Mammary epithelial cell (primary cell): ENCODE measurements at regions of chr10 and their contacts with region 1.

Region 1: DNA sequence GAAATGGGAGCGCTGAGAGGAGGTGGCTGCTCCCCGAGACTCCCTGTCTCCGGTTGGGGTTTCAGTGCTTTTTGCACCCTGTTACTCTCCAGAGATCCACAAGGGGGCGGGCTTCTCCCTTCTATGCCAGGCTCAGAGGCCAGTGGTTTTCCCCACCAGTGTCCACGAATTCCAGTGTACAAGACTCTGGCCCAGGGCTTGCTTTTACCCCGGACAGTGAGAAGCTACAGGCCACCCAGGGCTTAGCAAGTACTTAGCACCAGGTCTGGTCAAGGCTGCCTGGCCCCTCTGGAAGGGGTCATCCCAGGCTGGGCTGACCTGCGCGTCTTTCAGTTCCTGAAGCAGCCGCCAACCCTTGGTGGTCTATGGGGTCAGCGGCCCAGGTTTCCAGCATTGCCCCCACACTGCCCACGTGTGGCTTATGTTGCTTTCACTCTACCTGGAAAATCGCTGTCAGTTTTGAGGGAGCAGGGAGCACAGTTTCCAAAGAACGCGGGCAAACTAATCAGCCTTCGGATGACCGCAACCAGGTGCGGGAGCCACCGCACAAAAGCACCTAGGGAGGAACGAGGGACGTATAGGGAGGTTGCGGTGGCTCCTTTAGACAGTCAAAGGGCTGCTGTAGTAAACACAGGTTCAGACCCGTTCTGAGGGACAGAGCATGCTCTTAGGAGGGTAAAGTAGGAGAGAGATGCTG is 6.8 kb downstream of the CYP26A1 start:
- DNase-seq: no peak
- H3K4me3 ChIP-seq: no peak overlapping the region
- H3K27ac ChIP-seq: no peak overlapping the region
- H3K4me1 ChIP-seq: no peaks in the 10 kb centered on the region
- H3K27me3 ChIP-seq: peaks cover 2% of the 10 kb centered on the region
- CTCF ChIP-seq: peak; percentile 67 to 92

Region 2: GRCh38 chr10:92938841-92939240 is 141.7 kb before region 1 on chr10:
- CTCF ChIA-PET with region 1: no interaction called
- dilution Hi-C with region 1: no loop called
- in situ Hi-C with region 1: no loop called
- intact Hi-C with region 1: no loop called
- DNase-seq: no peak
- H3K4me3 ChIP-seq: no peak overlapping the region
- H3K27ac ChIP-seq: no peak overlapping the region
- H3K4me1 ChIP-seq: no peaks in the 10 kb centered on the region
- H3K27me3 ChIP-seq: no peaks in the 10 kb centered on the region
- CTCF ChIP-seq: no peak

Region 3: DNA sequence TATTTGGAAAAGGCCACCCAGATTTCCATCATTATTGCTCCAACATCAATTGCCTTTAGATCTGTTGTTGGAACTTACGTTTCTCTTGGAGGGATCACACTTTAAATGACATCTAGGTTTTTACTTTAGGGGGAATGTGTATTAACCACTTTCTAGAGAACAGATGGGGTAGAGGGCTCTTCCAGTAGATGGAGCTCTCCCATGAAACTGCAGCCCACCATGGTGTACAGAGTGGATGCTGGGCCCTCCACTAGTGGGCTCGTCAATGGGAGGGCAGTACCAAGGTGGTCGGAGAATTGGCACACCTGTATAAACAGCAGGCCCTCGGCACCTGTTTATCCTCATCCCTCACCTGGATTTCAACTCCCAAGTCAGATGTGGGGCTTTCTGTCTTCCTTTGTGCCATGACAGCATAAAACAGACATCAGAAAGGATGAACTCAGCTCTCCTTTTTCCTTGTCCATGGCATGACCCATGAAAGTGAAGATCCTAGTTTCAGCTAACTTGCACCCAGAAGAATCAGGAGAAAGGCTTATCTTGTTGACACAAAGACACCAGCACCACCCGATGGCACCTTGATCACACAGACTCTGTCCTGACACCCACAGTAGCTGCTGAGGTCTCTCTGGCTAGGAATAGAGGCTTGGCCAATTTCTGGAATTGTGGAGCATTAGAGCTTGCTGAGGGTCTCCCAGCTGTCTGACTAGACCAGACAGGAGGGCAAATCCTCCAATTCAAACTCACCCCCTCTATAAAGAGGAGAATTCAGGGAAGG is 143.7 kb after region 1 on chr10:
- CTCF ChIA-PET with region 1: no interaction called
- dilution Hi-C with region 1: no loop called
- in situ Hi-C with region 1: no loop called
- intact Hi-C with region 1: loop called (anchors 1 kb)
- DNase-seq: no peak
- H3K4me3 ChIP-seq: no peak overlapping the region
- H3K27ac ChIP-seq: no peak overlapping the region
- H3K4me1 ChIP-seq: no peaks in the 10 kb centered on the region
- H3K27me3 ChIP-seq: no peaks in the 10 kb centered on the region
- CTCF ChIP-seq: peak; percentile 19 to 51

Region 4: DNA sequence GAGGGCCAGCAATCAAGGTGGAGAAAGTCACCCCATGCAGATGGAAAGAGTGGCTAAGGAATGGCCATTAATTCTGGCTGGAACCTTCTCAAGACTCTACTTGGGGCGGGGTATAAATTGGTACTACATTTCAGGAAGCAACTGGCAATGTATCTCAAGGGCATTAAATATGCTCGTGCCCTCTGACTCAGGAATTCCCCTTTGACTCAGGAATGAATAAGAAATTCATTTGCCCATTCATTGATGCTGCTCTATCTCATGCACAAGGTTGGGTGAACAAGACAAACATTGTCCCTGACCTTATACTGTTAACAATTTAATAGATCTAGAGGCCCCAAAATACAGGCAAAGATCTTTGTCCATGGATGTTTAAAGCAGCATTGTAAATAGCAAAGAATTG is 213.5 kb after region 1 on chr10:
- CTCF ChIA-PET with region 1: no interaction called
- dilution Hi-C with region 1: no loop called
- in situ Hi-C with region 1: loop called in 1 of 2 experiments (anchors 5 kb)
- intact Hi-C with region 1: loop called (anchors 1 kb)
- DNase-seq: peak; percentile 60
- H3K4me3 ChIP-seq: no peak overlapping the region
- H3K27ac ChIP-seq: no peak overlapping the region
- H3K4me1 ChIP-seq: peaks cover 8% of the 10 kb centered on the region
- H3K27me3 ChIP-seq: no peaks in the 10 kb centered on the region
- CTCF ChIP-seq: no peak

Region 5: DNA sequence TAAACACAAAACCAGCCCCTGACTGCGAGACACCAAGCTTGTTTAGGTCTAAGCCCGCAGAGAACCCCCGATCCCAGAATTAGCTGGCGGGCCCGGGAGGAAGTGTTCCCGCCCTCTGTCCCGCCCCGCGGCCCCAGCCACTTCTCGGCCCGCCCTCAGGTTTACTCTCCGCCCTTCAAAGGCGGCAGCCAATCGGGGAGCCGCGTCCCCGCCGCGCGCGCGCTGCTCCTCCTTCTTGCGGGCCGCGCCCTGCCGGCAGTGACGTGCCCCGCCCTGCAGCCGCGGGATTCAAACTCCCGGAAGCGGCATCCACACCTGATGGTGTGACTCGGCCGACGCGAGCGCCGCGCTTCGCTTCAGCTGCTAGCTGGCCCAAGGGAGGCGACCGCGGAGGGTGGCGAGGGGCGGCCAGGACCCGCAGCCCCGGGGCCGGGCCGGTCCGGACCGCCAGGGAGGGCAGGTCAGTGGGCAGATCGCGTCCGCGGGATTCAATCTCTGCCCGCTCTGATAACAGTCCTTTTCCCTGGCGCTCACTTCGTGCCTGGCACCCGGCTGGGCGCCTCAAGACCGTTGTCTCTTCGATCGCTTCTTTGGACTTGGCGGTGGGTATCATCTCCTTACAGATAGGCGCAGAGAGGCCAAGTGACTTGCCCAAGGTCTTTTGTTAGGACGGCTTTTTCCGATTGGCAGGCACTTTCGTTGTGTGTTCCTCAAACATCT is 416.0 kb after region 1 on chr10 and contains the start of gene CEP55:
- CTCF ChIA-PET with region 1: no interaction called
- dilution Hi-C with region 1: no loop called
- in situ Hi-C with region 1: loop called (anchors 25 kb)
- intact Hi-C with region 1: no loop called
- DNase-seq: peak; percentile 95
- H3K4me3 ChIP-seq: peak within 1 kb of the TSS; percentile 75 to 83 (median 83)
- H3K27ac ChIP-seq: peak within 1 kb of the TSS; percentile 75
- H3K4me1 ChIP-seq: peaks cover 12% of the 10 kb centered on the region
- H3K27me3 ChIP-seq: no peaks in the 10 kb centered on the region
- CTCF ChIP-seq: no peak
- total RNA-seq, gene CEP55: 1.2 to 35.4 TPM

Region 6: GRCh38 chr10:93509816-93510215 is 429.3 kb after region 1 on chr10:
- CTCF ChIA-PET with region 1: no interaction called
- dilution Hi-C with region 1: no loop called
- in situ Hi-C with region 1: loop called in 1 of 2 experiments (anchors 25 kb)
- intact Hi-C with region 1: loop called (anchors 2 kb)
- DNase-seq: no peak
- H3K4me3 ChIP-seq: no peak overlapping the region
- H3K27ac ChIP-seq: no peak overlapping the region
- H3K4me1 ChIP-seq: no peaks in the 10 kb centered on the region
- H3K27me3 ChIP-seq: no peaks in the 10 kb centered on the region
- CTCF ChIP-seq: no peak